AG04450 (cell line): ENCODE measurements at regions of chr17 and their contacts with region 1.

Region 1: GRCh38 chr17:7703584-7704479 is 1.2 kb upstream of the EFNB3 start:
- DNase-seq: no peak
- H3K4me3 ChIP-seq: peak overlapping the region; percentile 57; the same call in 1 of the 2 replicates
- H3K27ac ChIP-seq: no peak overlapping the region
- H3K27me3 ChIP-seq: peaks cover 18% of the 10 kb centered on the region
- CTCF ChIP-seq: no peak

Region 2: GRCh38 chr17:7673239-7673638 is 30.6 kb before region 1 on chr17:
- CTCF ChIA-PET with region 1: no interaction called
- POLR2A ChIA-PET with region 1: no interaction called
- DNase-seq: no peak
- H3K4me3 ChIP-seq: no peak overlapping the region
- H3K27ac ChIP-seq: no peak overlapping the region
- H3K27me3 ChIP-seq: no peaks in the 10 kb centered on the region
- CTCF ChIP-seq: peak; percentile 48

Region 3: GRCh38 chr17:7716901-7717755 is 13.3 kb after region 1 on chr17 and contains the start of gene DNAH2:
- CTCF ChIA-PET with region 1: interaction called, 7 read pairs
- POLR2A ChIA-PET with region 1: interaction called, 10 read pairs
- DNase-seq: peak; percentile 82
- H3K4me3 ChIP-seq: peak within 1 kb of the TSS; percentile 74
- H3K27ac ChIP-seq: peak within 1 kb of the TSS; percentile 11
- H3K27me3 ChIP-seq: peaks cover 50% of the 10 kb centered on the region
- CTCF ChIP-seq: peak; percentile 45
- polyA plus RNA-seq, gene DNAH2: 0.04 and 0.06 TPM in 2 replicates